Right cardiac atrium (tissue), 5 donors: ENCODE measurements at regions of chr13 and their contacts with region 1.

Region 1: GRCh38 chr13:26698392-26699196 is 62.0 kb downstream of the GPR12 start:
- DNase-seq: peak; percentile 80 to 91 (median 89)
- ATAC-seq: peak; percentile 83 to 90
- H3K4me3 ChIP-seq: peak overlapping the region; percentile 41
- H3K27ac ChIP-seq: no peak overlapping the region
- H3K4me1 ChIP-seq: no peaks in the 10 kb centered on the region
- H3K27me3 ChIP-seq: no peaks in the 10 kb centered on the region

Region 2: DNA sequence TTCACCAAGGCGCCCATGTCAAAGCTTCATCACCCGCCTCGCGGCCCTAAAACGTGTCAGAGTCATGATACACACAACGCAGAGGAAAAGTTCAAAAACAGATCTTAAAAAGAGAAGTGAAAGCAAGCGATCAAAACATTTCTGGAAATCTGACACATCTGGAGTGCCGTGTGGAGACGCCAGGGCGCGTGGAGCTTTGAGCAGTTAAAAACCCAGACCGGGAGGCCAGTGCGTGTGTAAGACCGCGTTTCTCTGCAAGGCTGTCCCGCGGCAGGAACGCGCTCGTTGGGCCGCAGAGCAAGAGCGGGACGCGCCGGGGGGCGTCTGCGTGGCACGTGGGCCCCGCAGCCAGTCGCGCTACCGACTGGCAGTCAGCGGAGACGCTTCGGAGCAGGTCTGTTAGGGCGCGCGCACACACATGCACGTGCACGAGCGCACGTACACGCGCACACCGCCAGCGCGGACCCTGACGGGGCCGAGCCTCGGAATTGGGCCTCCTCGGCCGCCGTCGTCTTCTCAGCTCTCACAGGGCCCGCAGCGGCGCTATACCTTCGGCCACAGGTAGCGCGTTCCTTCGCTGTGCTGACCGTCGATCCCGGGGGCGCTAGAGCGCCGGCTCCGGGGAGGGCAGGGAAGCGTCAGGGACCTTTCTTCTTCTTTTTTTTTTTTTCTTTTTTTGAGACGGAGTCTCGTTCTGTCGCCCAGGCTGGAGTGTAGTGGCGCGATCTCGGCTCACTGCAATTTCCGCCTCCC is 512.3 kb before region 1 on chr13:
- intact Hi-C with region 1: loop called in 3 of 4 experiments (anchors 2 to 10 kb)
- DNase-seq: peak; percentile 90 to 96 (median 95)
- ATAC-seq: peak; percentile 97 to 98
- H3K4me3 ChIP-seq: peak overlapping the region; percentile 56
- H3K27ac ChIP-seq: peak overlapping the region; percentile 55
- H3K4me1 ChIP-seq: no peaks in the 10 kb centered on the region
- H3K27me3 ChIP-seq: no peaks in the 10 kb centered on the region

Region 3: DNA sequence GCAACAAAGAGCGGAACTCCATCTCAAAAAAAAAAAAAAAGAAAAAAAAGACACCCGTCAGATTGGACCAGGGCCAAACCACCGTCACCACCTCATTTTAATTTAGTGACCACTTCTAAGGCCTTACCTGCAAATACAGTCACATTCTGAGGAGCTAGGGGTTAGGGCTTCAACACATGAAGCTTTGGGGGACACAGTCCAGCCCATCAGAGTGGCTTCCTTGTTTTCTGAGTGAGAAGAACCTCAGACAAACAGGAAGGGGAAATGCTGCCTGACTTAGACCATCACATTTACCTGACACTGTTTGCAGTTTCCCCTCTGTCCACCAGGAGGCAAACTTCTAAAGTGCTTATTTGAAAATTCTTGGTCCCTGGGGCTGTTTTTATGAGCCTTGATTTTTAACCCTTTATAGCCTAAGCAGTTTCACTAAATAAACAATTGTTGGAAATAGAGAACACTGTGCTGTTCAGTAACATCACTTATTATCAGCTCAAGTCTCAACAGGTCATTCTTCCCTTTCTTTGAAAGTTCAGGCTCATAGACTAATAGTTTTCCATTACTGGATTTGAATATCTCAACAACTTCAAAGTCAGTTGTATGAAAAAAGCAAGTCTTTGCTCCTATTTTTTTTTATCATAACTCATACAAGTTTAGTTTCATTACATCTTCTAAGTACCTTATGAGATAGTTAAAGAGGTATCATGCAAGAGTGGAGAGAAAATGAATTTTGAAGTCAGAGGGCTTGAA is 216.0 kb before region 1 on chr13:
- intact Hi-C with region 1: loop called in 3 of 4 experiments (anchors 2 to 5 kb)
- DNase-seq: peak in 1 of 3 donors; percentile 44
- ATAC-seq: no peak
- H3K4me3 ChIP-seq: no peak overlapping the region
- H3K27ac ChIP-seq: no peak overlapping the region
- H3K4me1 ChIP-seq: no peaks in the 10 kb centered on the region
- H3K27me3 ChIP-seq: no peaks in the 10 kb centered on the region

Region 4: GRCh38 chr13:26498656-26499591 is 199.7 kb before region 1 on chr13:
- intact Hi-C with region 1: loop called in 1 of 4 experiments (anchors 10 kb)
- DNase-seq: no peak
- ATAC-seq: no peak
- H3K4me3 ChIP-seq: no peak overlapping the region
- H3K27ac ChIP-seq: no peak overlapping the region
- H3K4me1 ChIP-seq: no peaks in the 10 kb centered on the region
- H3K27me3 ChIP-seq: no peaks in the 10 kb centered on the region

Region 5: DNA sequence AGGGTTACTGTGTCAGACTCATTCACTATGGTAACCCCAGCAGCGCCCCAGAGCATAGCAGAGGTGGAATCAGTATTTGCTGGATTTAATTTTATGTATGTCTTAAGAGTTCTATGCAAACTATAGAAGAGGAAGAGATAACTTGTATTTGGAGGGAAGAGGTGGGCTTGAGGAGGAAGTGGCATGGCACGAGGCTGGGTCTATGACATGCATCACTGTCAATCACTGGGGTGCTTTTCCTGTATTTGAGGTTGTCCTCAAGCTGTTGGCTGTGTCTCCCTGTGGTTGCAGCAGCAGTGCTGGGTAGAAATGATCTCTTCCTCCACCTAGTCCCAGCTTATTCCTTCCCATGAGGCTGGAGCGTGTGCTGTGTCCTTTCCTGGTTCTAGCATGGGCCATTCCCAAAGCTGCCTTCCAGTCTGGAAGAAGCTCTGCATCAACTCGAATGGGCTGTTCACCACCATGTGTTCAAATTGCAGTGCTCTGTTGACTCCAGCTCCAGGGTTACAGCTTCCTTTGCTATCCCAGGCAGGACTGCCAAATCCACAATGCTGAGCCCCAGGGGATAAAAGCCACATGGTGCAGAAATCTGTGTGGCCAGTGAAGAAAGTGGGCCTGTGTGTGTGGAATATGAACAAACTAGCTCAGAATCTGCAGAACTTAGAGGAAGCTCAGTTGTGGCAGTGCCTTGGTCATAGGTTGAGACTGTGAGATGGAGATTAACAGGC is 824.9 kb after region 1 on chr13:
- intact Hi-C with region 1: no loop called
- DNase-seq: no peak
- ATAC-seq: peak in 1 of 2 donors; percentile 52
- H3K4me3 ChIP-seq: no peak overlapping the region
- H3K27ac ChIP-seq: no peak overlapping the region
- H3K4me1 ChIP-seq: no peaks in the 10 kb centered on the region
- H3K27me3 ChIP-seq: no peaks in the 10 kb centered on the region